HEK293T (cell line): ENCODE measurements at regions of chr10 and their contacts with region 1.

Region 1: GRCh38 chr10:132350391-132350790 is 18.4 kb downstream of the LRRC27 start:
- DNase-seq: no peak

Region 2: GRCh38 chr10:132360766-132361447 is 10.5 kb after region 1 on chr10:
- CTCF ChIA-PET with region 1: interaction called, 10 read pairs
- POLR2A ChIA-PET with region 1: no interaction called
- DNase-seq: peak; percentile 75

Region 3: DNA sequence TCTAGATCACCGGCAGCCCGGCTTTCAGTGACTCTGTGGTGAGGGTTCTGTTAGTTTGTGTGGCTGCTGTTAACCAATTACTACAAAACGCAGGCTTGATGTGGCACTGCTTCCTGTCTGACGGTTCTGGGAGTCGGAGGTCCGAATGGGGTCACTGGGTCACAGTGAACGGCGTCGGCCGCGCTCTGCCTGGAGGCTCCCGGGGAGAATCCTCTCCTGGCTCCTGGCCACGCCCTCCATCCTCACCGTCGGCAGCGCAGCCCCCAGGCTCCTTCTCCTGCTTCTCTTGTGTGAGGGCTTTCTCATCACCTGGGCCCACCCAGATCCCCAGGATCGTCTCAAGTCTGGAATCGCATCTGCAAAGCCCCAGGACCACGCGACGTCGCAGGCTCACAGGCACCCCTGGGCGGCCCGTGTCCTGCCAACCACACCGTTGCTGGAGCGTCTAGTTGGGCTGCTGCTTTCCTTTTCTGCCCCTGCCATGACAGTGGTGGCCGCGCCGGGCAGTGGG is 467.4 kb after region 1 on chr10:
- CTCF ChIA-PET with region 1: no interaction called
- POLR2A ChIA-PET with region 1: no interaction called
- DNase-seq: no peak